ENCODE measurements at regions of chr7 and their contacts with region 1.

Region 1: GRCh38 chr7:45122975-45123860 is 11.7 kb upstream of the TBRG4 start:
- DNase-seq: no peak
- ATAC-seq: no peak
- H3K4me3 ChIP-seq: no peak overlapping the region
- H3K27ac ChIP-seq: no peak overlapping the region
- H3K4me1 ChIP-seq: no peaks in the 10 kb centered on the region
- H3K27me3 ChIP-seq: no peaks in the 10 kb centered on the region

Region 2: GRCh38 chr7:44973610-44974401 is 149.4 kb before region 1 on chr7:
- intact Hi-C with region 1: loop called in 1 of 4 experiments (anchors 10 kb)
- DNase-seq: peak in 2 of 3 donors; percentile 74 to 80
- ATAC-seq: peak in 1 of 2 donors; percentile 40
- H3K4me3 ChIP-seq: no peak overlapping the region
- H3K27ac ChIP-seq: no peak overlapping the region
- H3K4me1 ChIP-seq: no peaks in the 10 kb centered on the region
- H3K27me3 ChIP-seq: no peaks in the 10 kb centered on the region

Region 3: DNA sequence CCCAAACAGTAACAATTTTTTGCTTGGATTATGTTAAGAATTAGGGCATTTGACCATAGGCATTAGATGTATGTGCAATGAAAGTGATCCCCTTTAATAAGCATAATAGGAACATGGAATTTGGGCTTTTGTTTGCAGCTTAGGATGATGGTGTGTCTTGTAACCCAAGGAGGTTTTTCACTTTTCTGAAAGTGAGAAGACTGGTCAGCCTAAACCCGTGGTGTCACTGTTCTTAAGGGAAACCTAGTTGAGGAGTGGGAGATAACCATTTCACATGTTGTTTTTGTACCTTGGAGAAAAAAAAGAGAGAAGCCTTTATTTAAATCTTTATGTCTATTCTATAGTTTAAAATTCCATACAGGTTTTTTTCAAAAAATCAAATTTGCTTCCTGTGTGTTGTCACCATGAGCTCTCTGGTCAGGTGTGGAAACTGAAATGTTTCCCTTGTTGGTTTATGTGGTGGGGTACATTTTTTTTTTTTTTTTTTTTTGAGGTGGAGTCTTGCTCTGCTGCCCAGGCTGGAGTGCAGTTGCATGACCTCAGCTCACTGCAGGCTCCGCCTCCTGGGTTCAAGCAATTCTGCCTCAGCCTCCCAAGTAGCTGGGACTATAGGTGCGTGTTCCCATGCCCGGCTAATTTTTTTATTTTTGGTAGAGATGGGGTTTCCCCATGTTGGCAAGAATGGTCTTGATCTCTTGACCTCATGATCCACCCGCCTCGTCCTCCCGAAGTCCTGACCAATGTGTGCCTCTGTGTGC is 115.5 kb before region 1 on chr7:
- intact Hi-C with region 1: no loop called
- DNase-seq: no peak
- ATAC-seq: no peak
- H3K4me3 ChIP-seq: no peak overlapping the region
- H3K27ac ChIP-seq: no peak overlapping the region
- H3K4me1 ChIP-seq: peaks cover 3% of the 10 kb centered on the region
- H3K27me3 ChIP-seq: no peaks in the 10 kb centered on the region

Region 4: GRCh38 chr7:45259966-45260646 is 136.9 kb after region 1 on chr7:
- intact Hi-C with region 1: no loop called
- DNase-seq: peak; percentile 49 to 86 (median 82)
- ATAC-seq: peak; percentile 85
- H3K4me3 ChIP-seq: no peak overlapping the region
- H3K27ac ChIP-seq: no peak overlapping the region
- H3K4me1 ChIP-seq: no peaks in the 10 kb centered on the region
- H3K27me3 ChIP-seq: no peaks in the 10 kb centered on the region

Measured in right cardiac atrium (tissue), 5 donors.